Endothelial cell of umbilical vein (primary cell): ENCODE measurements at regions of chr4 and their contacts with region 1.

Region 1: GRCh38 chr4:6308899-6309643 is 39.4 kb downstream of the WFS1 start:
- DNase-seq: peak; percentile 44
- H3K4me3 ChIP-seq: peak overlapping the region in 2 of 3 experiments; percentile 18 to 32
- H3K27ac ChIP-seq: no peak overlapping the region
- H3K4me1 ChIP-seq: no peaks in the 10 kb centered on the region
- H3K27me3 ChIP-seq: peaks cover 16 to 25% of the 10 kb centered on the region in 2 experiments
- CTCF ChIP-seq: peak in 1 of 2 donors; percentile 25
- POLR2A ChIP-seq: no peak

Region 2: GRCh38 chr4:6278801-6279197 is 30.3 kb before region 1 on chr4:
- CTCF ChIA-PET with region 1: no interaction called
- POLR2A ChIA-PET with region 1: no interaction called
- dilution Hi-C with region 1: no loop called
- intact Hi-C with region 1: loop called (anchors 1 kb)
- DNase-seq: peak; percentile 96
- H3K4me3 ChIP-seq: no peak overlapping the region
- H3K27ac ChIP-seq: peak overlapping the region; percentile 64
- H3K4me1 ChIP-seq: peaks cover 23% of the 10 kb centered on the region
- H3K27me3 ChIP-seq: no peaks in the 10 kb centered on the region
- CTCF ChIP-seq: no peak
- POLR2A ChIP-seq: peak; percentile 76

Region 3: GRCh38 chr4:7017446-7018330 is 708.6 kb after region 1 on chr4:
- CTCF ChIA-PET with region 1: no interaction called
- POLR2A ChIA-PET with region 1: no interaction called
- dilution Hi-C with region 1: no loop called
- intact Hi-C with region 1: no loop called
- DNase-seq: no peak
- H3K4me3 ChIP-seq: no peak overlapping the region
- H3K27ac ChIP-seq: no peak overlapping the region
- H3K4me1 ChIP-seq: no peaks in the 10 kb centered on the region
- H3K27me3 ChIP-seq: no peaks in the 10 kb centered on the region
- CTCF ChIP-seq: no peak
- POLR2A ChIP-seq: no peak